ENCODE measurements at regions of chr1 and their contacts with region 1.

Region 1: DNA sequence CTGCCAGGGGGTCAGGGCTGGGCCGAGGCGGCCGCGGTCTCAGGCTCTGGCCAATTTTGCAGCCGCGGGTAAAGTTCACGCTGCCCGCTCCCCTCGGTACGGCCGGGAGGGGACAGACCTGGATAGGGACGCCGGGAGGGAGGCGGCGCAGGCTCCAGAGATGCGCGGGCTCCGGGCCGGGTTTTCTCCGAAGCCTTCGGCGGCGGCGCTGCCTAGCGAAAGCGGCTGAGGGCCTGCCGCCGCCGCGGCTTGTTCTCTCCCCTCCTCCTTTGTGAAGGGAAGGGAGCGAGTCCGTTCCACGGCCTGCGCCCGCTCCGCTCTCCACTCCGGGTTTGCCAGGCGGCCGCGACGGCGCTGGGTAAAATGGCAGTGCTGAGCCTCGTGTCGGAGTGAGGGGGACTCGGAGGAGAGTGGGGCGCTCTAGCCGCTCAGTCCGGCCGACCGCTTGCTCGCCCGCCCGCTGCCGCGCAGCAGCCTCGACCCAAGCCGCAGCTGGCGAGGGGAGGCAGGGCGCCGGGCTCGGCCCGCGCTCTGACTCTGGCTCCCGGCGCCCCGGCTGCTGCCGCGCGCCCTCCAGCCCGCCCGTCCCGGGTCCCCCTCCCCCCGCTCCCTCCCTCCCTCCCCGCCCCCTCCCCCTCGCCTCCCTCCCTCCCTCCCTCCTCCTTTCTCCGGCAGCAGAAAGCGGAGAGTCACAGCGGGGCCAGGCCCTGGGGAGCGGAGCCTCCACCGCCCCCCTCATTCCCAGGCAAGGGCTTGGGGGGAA is at the start of gene ARID1A:
- DNase-seq: peak; percentile 96
- ATAC-seq: peak; percentile 62
- H3K4me3 Mint-ChIP-seq: peak within 1 kb of the TSS; percentile 92
- H3K27ac Mint-ChIP-seq: peak within 1 kb of the TSS; percentile 93
- H3K4me1 Mint-ChIP-seq: peaks cover 34% of the 10 kb centered on the region
- H3K27me3 Mint-ChIP-seq: no peaks in the 10 kb centered on the region
- CTCF ChIP-seq: no peak
- total RNA-seq, gene ARID1A: 116 and 142 TPM in 2 replicates

Region 2: GRCh38 chr1:26358411-26359384 is 336.8 kb before region 1 on chr1:
- CTCF ChIA-PET with region 1: no interaction called
- POLR2A ChIA-PET with region 1: no interaction called
- intact Hi-C with region 1: no loop called
- DNase-seq: no peak
- ATAC-seq: no peak
- H3K4me3 Mint-ChIP-seq: no peak overlapping the region
- H3K27ac Mint-ChIP-seq: no peak overlapping the region
- H3K4me1 Mint-ChIP-seq: peaks cover 25% of the 10 kb centered on the region
- H3K27me3 Mint-ChIP-seq: peaks cover 9% of the 10 kb centered on the region
- CTCF ChIP-seq: no peak

Region 3: GRCh38 chr1:26541816-26542711 is 153.5 kb before region 1 on chr1:
- CTCF ChIA-PET with region 1: interaction called, 4 read pairs
- POLR2A ChIA-PET with region 1: interaction called, 22 read pairs
- intact Hi-C with region 1: loop called (anchors 1 kb)
- DNase-seq: peak; percentile 72
- ATAC-seq: peak; percentile 62
- H3K4me3 Mint-ChIP-seq: peak overlapping the region; percentile 82
- H3K27ac Mint-ChIP-seq: peak overlapping the region; percentile 99
- H3K4me1 Mint-ChIP-seq: peaks cover 93% of the 10 kb centered on the region
- H3K27me3 Mint-ChIP-seq: no peaks in the 10 kb centered on the region
- CTCF ChIP-seq: no peak

Region 4: DNA sequence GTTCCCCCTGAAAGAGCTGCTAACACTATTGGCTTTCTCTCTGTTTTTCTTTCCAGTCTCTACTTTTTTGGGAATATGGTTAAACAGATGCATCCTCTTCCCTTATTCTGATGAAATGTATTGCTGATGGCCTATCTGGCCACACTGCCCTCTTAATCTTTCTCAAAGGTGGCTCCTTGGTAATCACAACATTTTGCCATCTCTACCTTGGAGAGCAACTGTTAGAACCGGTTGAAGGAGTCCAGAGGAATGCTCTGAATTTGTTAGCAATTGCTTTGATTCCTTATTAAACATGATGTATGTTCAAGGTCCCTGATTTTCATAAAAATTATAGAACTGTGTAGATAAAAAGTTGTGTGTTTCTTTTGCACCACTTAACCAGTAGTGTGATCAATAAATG is 49.8 kb before region 1 on chr1:
- CTCF ChIA-PET with region 1: no interaction called
- POLR2A ChIA-PET with region 1: no interaction called
- intact Hi-C with region 1: no loop called
- DNase-seq: no peak
- ATAC-seq: no peak
- H3K4me3 Mint-ChIP-seq: no peak overlapping the region
- H3K27ac Mint-ChIP-seq: no peak overlapping the region
- H3K4me1 Mint-ChIP-seq: no peaks in the 10 kb centered on the region
- H3K27me3 Mint-ChIP-seq: no peaks in the 10 kb centered on the region
- CTCF ChIP-seq: no peak

Region 5: DNA sequence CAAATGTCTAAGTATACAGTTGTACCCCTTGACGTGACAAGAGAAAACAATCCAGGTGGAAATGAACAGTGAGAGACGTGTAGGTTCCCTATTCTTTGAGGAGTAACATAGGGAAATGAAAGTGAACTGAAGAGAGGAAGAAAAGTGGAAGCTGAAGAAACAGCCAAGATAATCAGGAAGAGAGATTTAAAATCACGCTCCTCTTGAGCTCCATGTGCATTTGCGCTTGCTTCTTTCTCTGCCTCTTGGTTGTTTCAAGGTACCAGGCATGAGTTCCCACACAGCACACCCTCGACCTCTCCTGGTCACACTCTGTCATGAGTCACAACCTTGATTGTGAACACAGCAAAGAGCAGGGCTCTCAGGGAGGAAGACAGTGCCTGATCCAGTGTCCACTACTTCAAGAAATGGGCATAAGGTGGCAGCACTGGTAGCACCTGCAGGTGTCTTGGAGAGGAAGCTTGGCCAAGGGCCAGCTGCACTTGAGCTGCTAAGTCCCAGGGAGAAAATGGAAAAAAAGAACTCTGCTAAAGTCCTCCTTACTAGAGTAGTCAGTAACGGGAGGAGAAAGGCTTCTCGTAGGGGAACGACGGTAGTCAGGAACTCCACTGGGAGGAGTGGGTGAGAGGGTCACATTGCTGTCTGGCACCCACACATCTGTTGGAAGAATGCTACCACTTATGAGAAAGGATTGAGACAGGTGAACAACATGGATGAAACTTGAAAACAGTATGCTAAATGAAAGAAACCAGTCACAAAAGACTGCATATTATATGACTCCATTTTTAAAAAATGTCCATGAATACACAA is 18.0 kb before region 1 on chr1:
- CTCF ChIA-PET with region 1: interaction called, 39 read pairs
- POLR2A ChIA-PET with region 1: interaction called, 30 read pairs
- intact Hi-C with region 1: loop called (anchors 1 kb)
- DNase-seq: peak; percentile 32
- ATAC-seq: peak; percentile 99
- H3K4me3 Mint-ChIP-seq: peak overlapping the region; percentile 59
- H3K27ac Mint-ChIP-seq: peak overlapping the region; percentile 83
- H3K4me1 Mint-ChIP-seq: peaks cover 14% of the 10 kb centered on the region
- H3K27me3 Mint-ChIP-seq: no peaks in the 10 kb centered on the region
- CTCF ChIP-seq: no peak

Region 6: GRCh38 chr1:26723013-26723991 is 27.8 kb after region 1 on chr1:
- CTCF ChIA-PET with region 1: interaction called, 4 read pairs
- POLR2A ChIA-PET with region 1: interaction called, 11 read pairs
- intact Hi-C with region 1: no loop called
- DNase-seq: peak; percentile 20
- ATAC-seq: peak; percentile 49
- H3K4me3 Mint-ChIP-seq: peak overlapping the region; percentile 56
- H3K27ac Mint-ChIP-seq: peak overlapping the region; percentile 64
- H3K4me1 Mint-ChIP-seq: peaks cover 90% of the 10 kb centered on the region
- H3K27me3 Mint-ChIP-seq: no peaks in the 10 kb centered on the region
- CTCF ChIP-seq: no peak

Region 7: GRCh38 chr1:26799479-26800142 is 104.1 kb after region 1 on chr1:
- CTCF ChIA-PET with region 1: no interaction called
- POLR2A ChIA-PET with region 1: no interaction called
- intact Hi-C with region 1: no loop called
- DNase-seq: no peak
- ATAC-seq: no peak
- H3K4me3 Mint-ChIP-seq: no peak overlapping the region
- H3K27ac Mint-ChIP-seq: peak overlapping the region; percentile 50
- H3K4me1 Mint-ChIP-seq: peaks cover 8% of the 10 kb centered on the region
- H3K27me3 Mint-ChIP-seq: no peaks in the 10 kb centered on the region
- CTCF ChIP-seq: no peak

Region 8: GRCh38 chr1:26820784-26821269 is 125.3 kb after region 1 on chr1:
- CTCF ChIA-PET with region 1: no interaction called
- POLR2A ChIA-PET with region 1: interaction called, 12 read pairs
- intact Hi-C with region 1: no loop called
- DNase-seq: no peak
- ATAC-seq: peak; percentile 100
- H3K4me3 Mint-ChIP-seq: peak overlapping the region; percentile 55
- H3K27ac Mint-ChIP-seq: peak overlapping the region; percentile 81
- H3K4me1 Mint-ChIP-seq: peaks cover 28% of the 10 kb centered on the region
- H3K27me3 Mint-ChIP-seq: peaks cover 3% of the 10 kb centered on the region
- CTCF ChIP-seq: no peak